ENCODE measurements at regions of chr6 and their contacts with region 1.

Region 1: GRCh38 chr6:31246050-31246521 is 25.8 kb downstream of the HLA-C start:
- DNase-seq: peak; percentile 95
- ATAC-seq: peak; percentile 100
- H3K4me3 ChIP-seq: no peak overlapping the region
- H3K27ac ChIP-seq: peak overlapping the region; percentile 57
- H3K4me1 ChIP-seq: peaks cover 22% of the 10 kb centered on the region
- H3K27me3 ChIP-seq: no peaks in the 10 kb centered on the region
- CTCF ChIP-seq: no peak

Region 2: GRCh38 chr6:31042806-31043205 is 203.3 kb before region 1 on chr6:
- CTCF ChIA-PET with region 1: no interaction called
- POLR2A ChIA-PET with region 1: no interaction called
- intact Hi-C with region 1: no loop called
- DNase-seq: peak; percentile 80
- ATAC-seq: peak; percentile 73
- H3K4me3 ChIP-seq: no peak overlapping the region
- H3K27ac ChIP-seq: no peak overlapping the region
- H3K4me1 ChIP-seq: peaks cover under 1% of the 10 kb centered on the region
- H3K27me3 ChIP-seq: no peaks in the 10 kb centered on the region
- CTCF ChIP-seq: peak; percentile 67

Region 3: GRCh38 chr6:31203345-31203979 is 42.6 kb before region 1 on chr6:
- CTCF ChIA-PET with region 1: no interaction called
- POLR2A ChIA-PET with region 1: no interaction called
- intact Hi-C with region 1: loop called (anchors 5 kb)
- DNase-seq: peak; percentile 92
- ATAC-seq: peak; percentile 86
- H3K4me3 ChIP-seq: peak overlapping the region; percentile 73
- H3K27ac ChIP-seq: peak overlapping the region; percentile 92
- H3K4me1 ChIP-seq: peaks cover 38% of the 10 kb centered on the region
- H3K27me3 ChIP-seq: no peaks in the 10 kb centered on the region
- CTCF ChIP-seq: no peak

Region 4: GRCh38 chr6:31222496-31222895 is 23.6 kb before region 1 on chr6:
- CTCF ChIA-PET with region 1: no interaction called
- POLR2A ChIA-PET with region 1: interaction called, 18 read pairs
- intact Hi-C with region 1: no loop called
- DNase-seq: no peak
- ATAC-seq: no peak
- H3K4me3 ChIP-seq: no peak overlapping the region
- H3K27ac ChIP-seq: no peak overlapping the region
- H3K4me1 ChIP-seq: no peaks in the 10 kb centered on the region
- H3K27me3 ChIP-seq: no peaks in the 10 kb centered on the region
- CTCF ChIP-seq: no peak